ENCODE measurements at regions of chr3 and their contacts with region 1.

Region 1: GRCh38 chr3:4978204-4978965 is 852 bp upstream of the BHLHE40 start:
- DNase-seq: peak; percentile 99 to 100
- ATAC-seq: peak; percentile 90
- H3K4me3 ChIP-seq: peak overlapping the region; percentile 42 to 50
- H3K27ac ChIP-seq: peak overlapping the region; percentile 87 to 98
- H3K4me1 ChIP-seq: no peaks in the 10 kb centered on the region
- H3K27me3 ChIP-seq: no peaks in the 10 kb centered on the region

Region 2: DNA sequence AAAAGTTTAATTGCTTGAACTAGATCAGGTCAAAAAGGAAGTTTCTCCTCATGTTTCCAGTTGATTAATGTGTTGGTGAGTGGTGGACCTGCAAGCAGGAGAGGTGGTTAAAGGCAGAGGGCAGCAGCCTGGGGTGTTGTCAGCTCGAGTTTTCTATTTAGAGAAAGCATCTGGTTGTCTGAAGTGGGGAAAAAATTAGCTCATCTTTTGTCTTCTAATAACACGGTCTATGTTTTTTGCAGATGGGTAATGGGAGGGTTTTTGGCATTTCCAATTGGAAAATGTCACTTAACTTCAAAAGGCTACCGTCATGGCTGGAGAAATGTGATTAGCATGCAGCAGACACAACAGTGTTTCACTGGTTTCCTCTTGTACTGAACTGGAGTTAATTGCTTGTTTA is 362.6 kb before region 1 on chr3:
- intact Hi-C with region 1: no loop called
- DNase-seq: no peak
- ATAC-seq: no peak
- H3K4me3 ChIP-seq: no peak overlapping the region
- H3K27ac ChIP-seq: no peak overlapping the region
- H3K4me1 ChIP-seq: no peaks in the 10 kb centered on the region
- H3K27me3 ChIP-seq: no peaks in the 10 kb centered on the region

Region 3: DNA sequence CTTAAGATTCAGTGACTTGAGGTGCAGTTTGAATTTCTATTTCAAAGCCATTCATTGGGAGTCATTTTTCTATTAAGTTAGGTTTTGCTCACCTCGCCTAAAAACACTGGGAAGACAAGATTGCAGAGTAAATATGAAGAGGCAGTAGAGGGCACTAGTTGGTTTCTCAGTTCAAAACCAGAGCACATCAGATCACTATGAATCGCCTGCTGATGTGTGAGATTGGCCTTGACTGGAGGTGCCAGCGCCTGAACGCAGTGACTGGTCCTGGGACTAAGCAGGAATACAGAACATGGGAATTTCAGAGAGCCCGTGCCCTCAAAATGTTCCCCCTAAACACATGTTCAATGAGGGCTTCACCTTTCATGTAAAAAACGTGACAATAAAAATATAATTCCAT is 256.3 kb before region 1 on chr3:
- intact Hi-C with region 1: loop called (anchors 5 kb)
- DNase-seq: peak in 1 of 2 donors; percentile 56
- ATAC-seq: peak; percentile 69
- H3K4me3 ChIP-seq: no peak overlapping the region
- H3K27ac ChIP-seq: peak overlapping the region in 1 of 2 donors; percentile 64
- H3K4me1 ChIP-seq: peaks cover 0 to 2% of the 10 kb centered on the region in 2 donors
- H3K27me3 ChIP-seq: no peaks in the 10 kb centered on the region

Region 4: DNA sequence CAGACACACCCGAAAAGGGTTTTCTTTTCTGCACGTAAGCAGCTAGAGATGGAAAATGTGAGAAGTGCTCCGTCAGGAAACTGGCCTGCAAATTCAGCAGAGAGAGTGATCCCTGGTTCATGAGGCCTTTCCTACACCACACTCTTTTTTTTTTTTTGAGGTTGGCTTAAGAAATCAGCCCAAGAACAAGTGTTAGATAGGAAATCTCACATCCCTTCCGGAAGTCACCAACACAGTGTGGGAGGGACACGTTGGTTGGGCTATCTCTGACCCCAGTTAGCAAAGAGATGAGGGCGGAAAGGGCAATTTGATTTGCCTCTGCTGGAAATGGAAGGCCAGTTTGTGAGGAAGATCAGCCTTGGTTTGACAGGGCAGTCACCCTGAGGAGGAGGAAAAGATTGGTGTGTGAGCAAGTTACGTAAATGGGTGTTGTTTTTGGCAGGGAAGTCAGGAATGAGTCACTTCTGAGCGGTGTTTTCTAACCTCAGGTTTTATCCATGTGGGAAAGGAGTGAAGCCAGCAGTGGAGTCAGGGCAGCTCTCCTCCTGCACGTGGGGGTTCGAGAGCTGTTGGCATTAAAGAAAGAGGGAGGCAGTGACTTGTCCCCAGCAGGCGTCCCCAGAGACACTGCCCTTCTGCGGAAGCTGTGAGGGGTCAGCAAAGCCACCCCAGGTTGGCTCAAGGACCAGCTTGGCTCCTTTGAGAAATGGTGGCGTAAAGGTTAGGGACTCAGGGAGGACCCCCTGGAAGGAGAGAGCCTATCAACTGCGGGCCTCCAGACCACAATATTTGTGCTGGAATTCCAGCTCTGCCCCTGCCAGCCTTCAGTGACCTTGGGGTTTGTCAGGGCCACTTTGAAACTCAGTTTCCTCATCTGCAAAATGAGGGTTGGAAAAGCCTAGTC is 236.7 kb before region 1 on chr3:
- intact Hi-C with region 1: loop called in 1 of 2 experiments (anchors 2 kb)
- DNase-seq: peak; percentile 77 to 79
- ATAC-seq: peak; percentile 92
- H3K4me3 ChIP-seq: no peak overlapping the region
- H3K27ac ChIP-seq: peak overlapping the region; percentile 72 to 94
- H3K4me1 ChIP-seq: peaks cover 0 to 5% of the 10 kb centered on the region in 2 donors
- H3K27me3 ChIP-seq: no peaks in the 10 kb centered on the region

Region 5: GRCh38 chr3:4826237-4827100 is 151.9 kb before region 1 on chr3:
- intact Hi-C with region 1: loop called (anchors 5 kb)
- DNase-seq: peak; percentile 94
- ATAC-seq: peak; percentile 91
- H3K4me3 ChIP-seq: no peak overlapping the region
- H3K27ac ChIP-seq: peak overlapping the region; percentile 58 to 87
- H3K4me1 ChIP-seq: peaks cover 2 to 6% of the 10 kb centered on the region in 2 donors
- H3K27me3 ChIP-seq: no peaks in the 10 kb centered on the region

Region 6: GRCh38 chr3:4898454-4899313 is 79.7 kb before region 1 on chr3:
- intact Hi-C with region 1: loop called in 1 of 2 experiments (anchors 5 kb)
- DNase-seq: no peak
- ATAC-seq: peak; percentile 23
- H3K4me3 ChIP-seq: no peak overlapping the region
- H3K27ac ChIP-seq: peak overlapping the region in 1 of 2 donors; percentile 94
- H3K4me1 ChIP-seq: peaks cover 2 to 6% of the 10 kb centered on the region in 2 donors
- H3K27me3 ChIP-seq: no peaks in the 10 kb centered on the region

Region 7: GRCh38 chr3:5057857-5058324 is 79.5 kb after region 1 on chr3:
- intact Hi-C with region 1: loop called in 1 of 2 experiments (anchors 5 kb)
- DNase-seq: peak; percentile 82 to 86
- ATAC-seq: peak; percentile 87
- H3K4me3 ChIP-seq: no peak overlapping the region
- H3K27ac ChIP-seq: no peak overlapping the region
- H3K4me1 ChIP-seq: peaks cover 0 to 3% of the 10 kb centered on the region in 2 donors
- H3K27me3 ChIP-seq: no peaks in the 10 kb centered on the region

Region 8: DNA sequence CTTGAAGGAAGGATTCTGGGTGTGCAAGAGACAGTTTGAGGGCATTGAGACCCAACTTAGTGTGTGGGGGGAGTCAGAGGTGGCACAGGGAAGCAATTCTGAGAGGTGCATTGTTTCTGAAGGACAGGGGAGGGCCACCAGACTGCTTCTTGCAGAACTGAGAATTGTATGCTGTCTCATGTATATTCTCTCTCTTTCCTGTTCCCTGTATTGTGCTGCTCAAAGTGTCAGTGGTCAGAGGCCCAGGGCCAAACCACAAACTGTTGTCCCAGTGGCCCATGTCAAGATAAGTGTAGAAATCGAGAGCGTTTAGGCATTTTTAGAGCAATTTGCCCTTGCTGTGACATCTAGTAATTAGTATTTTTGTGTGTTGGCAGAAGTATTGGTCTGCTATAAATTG is 776.2 kb after region 1 on chr3:
- intact Hi-C with region 1: no loop called
- DNase-seq: peak in 1 of 2 donors; percentile 50
- ATAC-seq: no peak
- H3K4me3 ChIP-seq: no peak overlapping the region
- H3K27ac ChIP-seq: no peak overlapping the region
- H3K4me1 ChIP-seq: no peaks in the 10 kb centered on the region
- H3K27me3 ChIP-seq: no peaks in the 10 kb centered on the region

Measured in aorta (tissue), 5 donors.